ENCODE measurements at regions of chr2 and their contacts with region 1.

Region 1: GRCh38 chr2:8247905-8248622 is 433.8 kb upstream of the ID2 start:
- DNase-seq: peak; percentile 47 to 84
- H3K4me3 ChIP-seq: peak overlapping the region in 1 of 2 donors; percentile 32
- H3K27ac ChIP-seq: peak overlapping the region; percentile 85 to 89
- H3K4me1 ChIP-seq: peaks cover 0 to 40% (median 20%) of the 10 kb centered on the region in 4 donors
- H3K27me3 ChIP-seq: no peaks in the 10 kb centered on the region
- CTCF ChIP-seq: no peak

Region 2: DNA sequence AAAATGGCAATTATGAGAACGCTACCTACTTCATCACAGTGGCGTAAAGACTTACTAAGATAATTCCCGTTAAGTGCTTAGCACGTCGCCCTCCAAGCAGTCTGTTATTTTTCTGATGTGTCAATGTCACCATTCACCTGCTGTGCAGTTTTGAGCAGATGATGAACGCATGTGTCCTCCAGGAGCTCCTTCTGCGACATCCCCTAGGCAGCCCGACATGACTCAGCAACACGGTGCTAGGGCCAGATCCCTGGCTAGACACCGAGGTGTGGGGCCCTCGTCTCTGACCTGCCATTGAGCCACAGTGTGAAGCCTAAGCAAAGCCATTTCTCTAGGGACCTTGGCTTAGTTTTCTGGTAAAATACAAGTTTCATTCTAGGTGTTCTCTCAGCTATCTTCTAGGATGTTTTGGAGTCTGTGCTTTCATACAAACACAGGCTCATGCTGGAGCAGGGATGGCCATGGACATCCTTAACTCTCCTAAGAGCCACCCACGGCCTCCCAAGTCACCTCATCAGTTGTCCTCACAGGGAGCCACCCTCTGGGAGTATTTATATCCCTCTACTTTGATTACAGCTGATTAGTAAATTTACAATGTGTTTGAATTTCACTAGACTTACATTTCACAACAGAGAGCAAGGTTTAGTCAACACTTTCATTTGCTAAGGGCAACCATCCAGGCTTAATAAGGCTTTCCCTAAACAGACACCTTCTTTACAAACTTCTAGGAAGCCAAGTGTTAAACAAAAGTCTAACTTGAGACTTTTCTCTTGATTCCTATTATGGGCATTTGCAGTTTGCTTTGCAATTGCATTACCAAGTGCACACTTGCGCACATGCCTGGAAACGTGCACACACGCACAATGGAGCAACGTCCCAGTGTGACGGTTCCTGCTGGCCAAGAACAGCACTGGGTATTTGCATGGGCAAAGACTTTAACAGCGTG is 57.0 kb after region 1 on chr2:
- intact Hi-C with region 1: loop called (anchors 2 kb)
- DNase-seq: peak; percentile 55 to 94
- H3K4me3 ChIP-seq: no peak overlapping the region
- H3K27ac ChIP-seq: peak overlapping the region; percentile 78 to 83
- H3K4me1 ChIP-seq: peaks cover 0 to 52% (median 13%) of the 10 kb centered on the region in 4 donors
- H3K27me3 ChIP-seq: no peaks in the 10 kb centered on the region
- CTCF ChIP-seq: no peak

Measured in tibial artery (tissue), 4 donors.